ENCODE measurements at regions of chr15 and their contacts with region 1.

Region 1: GRCh38 chr15:43903864-43904290 is 77.1 kb downstream of the WDR76 start:
- DNase-seq: no peak
- H3K4me3 ChIP-seq: no peak overlapping the region
- H3K27ac ChIP-seq: no peak overlapping the region
- H3K4me1 ChIP-seq: peaks cover 0 to 6% (median 0%) of the 10 kb centered on the region in 4 donors
- H3K27me3 ChIP-seq: no peaks in the 10 kb centered on the region
- CTCF ChIP-seq: peak; percentile 60 to 89 (median 79)
- EP300 ChIP-seq: no peak
- POLR2A ChIP-seq: no peak

Region 2: DNA sequence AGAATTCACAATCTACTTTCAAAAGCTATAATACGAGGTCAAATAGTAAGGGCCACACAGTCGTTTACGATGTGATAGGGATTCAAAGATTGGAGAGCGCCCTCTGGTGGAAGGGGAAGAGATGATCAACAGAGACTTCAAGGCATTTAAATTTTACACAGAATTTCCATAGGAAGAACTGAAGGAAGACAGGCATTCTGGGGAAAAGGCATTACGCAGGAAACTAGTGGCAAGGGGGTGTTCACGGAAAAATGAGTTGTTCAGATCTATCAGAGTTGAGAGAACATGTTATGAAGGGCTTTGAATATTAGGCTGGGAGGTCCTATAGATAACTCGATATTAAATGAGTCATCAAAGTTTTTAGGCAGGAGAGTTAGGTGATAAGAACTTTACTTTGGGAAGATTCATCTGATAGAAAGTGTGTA is 162.5 kb after region 1 on chr15:
- intact Hi-C with region 1: loop called (anchors 2 kb)
- DNase-seq: no peak
- H3K4me3 ChIP-seq: no peak overlapping the region
- H3K27ac ChIP-seq: no peak overlapping the region
- H3K4me1 ChIP-seq: no peaks in the 10 kb centered on the region
- H3K27me3 ChIP-seq: no peaks in the 10 kb centered on the region
- CTCF ChIP-seq: peak; percentile 11 to 63 (median 56)
- EP300 ChIP-seq: no peak
- POLR2A ChIP-seq: no peak

Region 3: GRCh38 chr15:44215594-44215993 is 311.7 kb after region 1 on chr15:
- intact Hi-C with region 1: loop called (anchors 5 kb)
- DNase-seq: no peak
- H3K4me3 ChIP-seq: no peak overlapping the region
- H3K27ac ChIP-seq: no peak overlapping the region
- H3K4me1 ChIP-seq: no peaks in the 10 kb centered on the region
- H3K27me3 ChIP-seq: no peaks in the 10 kb centered on the region
- CTCF ChIP-seq: no peak
- EP300 ChIP-seq: no peak
- POLR2A ChIP-seq: no peak